GM10248 (cell line): ENCODE measurements at regions of chr11 and their contacts with region 1.

Region 1: DNA sequence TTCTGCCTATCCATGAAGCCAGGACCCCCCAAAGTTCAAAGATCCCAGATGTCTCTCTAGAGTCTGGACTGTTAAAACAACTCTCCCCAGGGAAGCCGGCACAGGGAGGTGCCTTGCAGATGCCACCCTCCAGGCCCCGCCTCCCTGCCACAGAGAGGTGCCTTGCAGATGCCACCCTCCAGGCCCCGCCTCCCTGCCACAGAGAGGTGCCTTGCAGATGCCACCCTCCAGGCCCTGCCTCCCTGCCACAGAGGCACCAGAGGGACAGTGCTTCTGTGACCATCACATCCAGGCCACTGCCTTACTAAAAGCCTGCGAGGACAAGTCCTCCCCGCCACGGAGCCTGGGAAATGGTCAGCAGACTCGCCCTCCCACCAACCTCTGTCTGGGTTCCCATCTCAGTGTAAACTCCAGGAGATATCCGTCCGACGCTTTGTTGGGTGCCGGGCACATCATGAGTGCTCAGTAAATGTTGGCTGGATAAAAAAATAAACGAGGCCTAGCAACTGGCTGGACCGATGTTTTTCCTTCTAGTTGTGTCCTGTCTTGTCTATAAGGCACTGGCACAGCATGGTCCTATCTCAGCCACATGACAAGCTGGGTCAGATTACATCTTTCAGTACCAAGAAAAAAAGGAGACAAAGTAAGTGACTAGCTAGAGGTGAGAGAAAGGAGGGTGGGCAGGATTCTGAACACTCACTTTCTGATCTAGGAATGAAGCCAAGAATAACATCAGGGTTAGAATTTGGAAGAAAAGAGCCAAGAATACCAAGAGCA is 91.2 kb upstream of the CSNK2A3 start:
- DNase-seq: no peak
- CTCF ChIP-seq: no peak

Region 2: DNA sequence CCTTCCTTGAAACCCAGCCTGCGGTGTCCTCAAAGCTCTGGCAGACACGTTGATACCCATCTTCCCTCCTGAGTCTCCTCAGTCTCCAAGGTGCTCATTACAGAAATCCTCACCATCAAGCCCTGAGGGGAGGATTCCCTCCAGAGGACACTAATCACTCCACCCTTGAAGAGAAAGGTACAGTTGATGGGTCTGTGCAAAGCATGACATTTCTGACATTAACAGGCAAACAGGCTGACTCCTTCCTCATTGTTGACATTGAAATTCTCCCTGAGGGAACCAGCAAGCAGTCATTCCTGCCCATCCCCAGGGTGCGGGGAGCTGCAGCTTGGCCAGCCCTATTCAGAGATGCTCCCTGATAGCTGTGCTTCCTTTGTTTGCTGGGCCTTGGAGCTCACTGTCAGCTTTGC is 10.5 kb after region 1 on chr11:
- CTCF ChIA-PET with region 1: interaction called, 10 read pairs
- POLR2A ChIA-PET with region 1: no interaction called
- DNase-seq: no peak
- CTCF ChIP-seq: no peak